ENCODE measurements at regions of chr9 and their contacts with region 1.

Region 1: GRCh38 chr9:83538172-83538889 is at the start of gene FRMD3:
- DNase-seq: peak; percentile 91
- H3K4me3 ChIP-seq: peak within 1 kb of the TSS; percentile 74 to 79
- H3K27ac ChIP-seq: peak within 1 kb of the TSS; percentile 40 to 80; a peak in 3 of 4 replicates
- H3K4me1 ChIP-seq: peaks cover 0 to 23% of the 10 kb centered on the region in 2 experiments; a peak in 1 of 4 replicates
- H3K27me3 ChIP-seq: no peaks in the 10 kb centered on the region
- CTCF ChIP-seq: peak; percentile 70
- EP300 ChIP-seq: no peak
- RAD21 ChIP-seq: peak; percentile 68
- polyA plus RNA-seq, gene FRMD3: 0.89 and 1.3 TPM in 2 replicates

Region 2: GRCh38 chr9:83199243-83199642 is 339.1 kb before region 1 on chr9:
- CTCF ChIA-PET with region 1: interaction called, 12 read pairs
- POLR2A ChIA-PET with region 1: no interaction called
- DNase-seq: peak; percentile 63
- H3K4me3 ChIP-seq: no peak overlapping the region; a peak in 1 of 4 replicates
- H3K27ac ChIP-seq: no peak overlapping the region
- H3K4me1 ChIP-seq: peaks cover 0 to 8% of the 10 kb centered on the region in 2 experiments; a peak in 1 of 4 replicates
- H3K27me3 ChIP-seq: peaks cover 4% of the 10 kb centered on the region; the same call in 1 of the 2 replicates
- CTCF ChIP-seq: peak; percentile 69
- EP300 ChIP-seq: no peak
- RAD21 ChIP-seq: peak; percentile 97

Region 3: DNA sequence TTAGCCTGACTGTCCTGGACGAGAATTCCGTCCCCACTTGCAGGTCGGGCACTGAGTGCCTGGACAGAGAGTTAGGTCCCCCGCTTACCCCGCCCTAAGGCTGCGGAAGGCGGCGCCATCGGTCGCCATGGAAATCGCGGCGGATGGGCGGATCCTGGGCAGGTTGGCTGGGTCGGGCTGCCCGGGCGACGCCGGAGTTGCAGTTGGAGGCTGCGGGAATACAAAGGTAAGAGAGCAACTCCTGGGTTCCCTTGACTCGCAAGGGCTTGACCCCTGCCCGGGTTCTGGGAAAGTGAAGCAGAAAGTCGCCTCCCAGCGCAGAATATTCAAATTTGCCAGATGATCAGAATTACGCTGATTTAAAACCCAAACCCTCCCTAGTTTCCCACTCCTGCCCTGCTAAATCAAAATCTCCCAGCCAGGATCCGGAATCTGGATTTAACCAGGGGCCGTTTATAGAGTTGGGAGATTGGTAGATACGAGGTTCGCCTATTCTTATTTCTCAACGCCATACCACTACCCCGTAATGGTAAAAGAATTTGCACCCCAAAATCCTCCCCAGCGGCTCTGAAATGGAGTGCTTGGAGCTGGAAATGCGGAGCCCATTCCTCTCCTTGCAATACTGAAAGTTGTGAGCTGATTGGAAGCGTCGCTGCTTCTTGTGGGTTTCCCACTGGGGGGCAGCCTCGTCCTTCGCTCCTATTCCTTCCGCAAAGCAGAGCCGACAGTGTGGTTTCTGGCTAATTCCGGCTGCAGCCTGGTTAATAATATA is 319.0 kb before region 1 on chr9:
- CTCF ChIA-PET with region 1: interaction called, 17 read pairs
- POLR2A ChIA-PET with region 1: interaction called, 3 read pairs
- DNase-seq: peak; percentile 84
- H3K4me3 ChIP-seq: peak overlapping the region; percentile 80 to 83
- H3K27ac ChIP-seq: peak overlapping the region; percentile 57 to 93; a peak in 3 of 4 replicates
- H3K4me1 ChIP-seq: peaks cover 0 to 17% of the 10 kb centered on the region in 2 experiments; a peak in 3 of 4 replicates
- H3K27me3 ChIP-seq: no peaks in the 10 kb centered on the region
- CTCF ChIP-seq: peak; percentile 45
- EP300 ChIP-seq: no peak
- RAD21 ChIP-seq: peak; percentile 82

Region 4: DNA sequence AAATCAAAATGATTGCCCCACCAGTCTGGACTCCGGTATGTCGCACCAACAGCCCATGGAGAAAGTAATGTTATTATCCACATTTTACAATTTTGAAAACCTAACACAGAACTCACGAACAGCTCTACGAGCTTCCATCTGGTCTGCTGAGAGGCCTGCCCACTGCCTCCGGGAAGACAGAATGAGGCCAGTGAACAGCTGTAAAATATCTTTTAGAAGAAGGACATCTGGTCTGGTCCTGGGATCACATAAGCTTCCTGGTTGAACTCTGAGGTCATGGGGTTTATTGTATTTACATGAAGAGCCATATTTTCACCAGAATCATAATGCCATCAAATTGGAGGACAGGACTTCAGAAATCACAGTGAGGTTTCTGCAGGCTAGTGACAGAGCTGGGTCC is 89.2 kb before region 1 on chr9:
- CTCF ChIA-PET with region 1: interaction called, 16 read pairs
- POLR2A ChIA-PET with region 1: interaction called, 5 read pairs
- DNase-seq: peak; percentile 80
- H3K4me3 ChIP-seq: no peak overlapping the region
- H3K27ac ChIP-seq: peak overlapping the region; percentile 26 to 97; a peak in 2 of 4 replicates
- H3K4me1 ChIP-seq: peaks cover 0 to 39% of the 10 kb centered on the region in 2 experiments; a peak in 2 of 4 replicates
- H3K27me3 ChIP-seq: no peaks in the 10 kb centered on the region
- CTCF ChIP-seq: no peak
- EP300 ChIP-seq: peak in 1 of 2 experiments; percentile 88; a peak in 2 of 4 replicates
- RAD21 ChIP-seq: no peak

Region 5: GRCh38 chr9:83526901-83527300 is 11.4 kb before region 1 on chr9:
- CTCF ChIA-PET with region 1: interaction called, 11 read pairs
- POLR2A ChIA-PET with region 1: interaction called, 3 read pairs
- DNase-seq: no peak
- H3K4me3 ChIP-seq: no peak overlapping the region
- H3K27ac ChIP-seq: peak overlapping the region in 1 of 2 experiments; percentile 28; a peak in 1 of 4 replicates
- H3K4me1 ChIP-seq: peaks cover 4 to 10% of the 10 kb centered on the region in 2 experiments; a peak in 2 of 4 replicates
- H3K27me3 ChIP-seq: no peaks in the 10 kb centered on the region
- CTCF ChIP-seq: no peak
- EP300 ChIP-seq: no peak
- RAD21 ChIP-seq: no peak

Region 6: DNA sequence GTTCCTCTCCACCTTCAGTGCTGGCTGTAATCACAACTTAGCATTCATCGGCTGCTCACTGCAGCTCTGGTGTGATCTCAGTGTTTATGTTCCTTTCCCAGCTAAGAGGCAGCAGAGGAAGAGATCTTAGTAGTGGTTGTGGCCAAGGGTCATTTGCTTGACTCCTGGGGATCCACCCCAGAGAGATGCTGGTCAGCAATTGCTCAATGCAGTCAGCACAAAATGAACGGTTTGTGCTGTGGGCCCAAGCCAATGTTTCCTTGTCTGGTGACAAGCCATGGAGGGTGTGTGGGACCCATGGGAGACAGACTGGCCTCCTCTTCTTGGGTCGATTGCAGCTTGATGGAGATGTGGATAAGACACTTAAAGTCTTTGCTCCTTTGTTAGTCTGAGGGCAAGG is 15.9 kb after region 1 on chr9:
- CTCF ChIA-PET with region 1: interaction called, 28 read pairs
- POLR2A ChIA-PET with region 1: no interaction called
- DNase-seq: no peak
- H3K4me3 ChIP-seq: no peak overlapping the region
- H3K27ac ChIP-seq: no peak overlapping the region
- H3K4me1 ChIP-seq: peaks cover 0 to 2% of the 10 kb centered on the region in 2 experiments; a peak in 1 of 4 replicates
- H3K27me3 ChIP-seq: no peaks in the 10 kb centered on the region
- CTCF ChIP-seq: no peak
- EP300 ChIP-seq: no peak
- RAD21 ChIP-seq: no peak

Region 7: GRCh38 chr9:83633255-83633654 is 94.9 kb after region 1 on chr9:
- CTCF ChIA-PET with region 1: no interaction called
- POLR2A ChIA-PET with region 1: no interaction called
- DNase-seq: no peak
- H3K4me3 ChIP-seq: no peak overlapping the region
- H3K27ac ChIP-seq: no peak overlapping the region
- H3K4me1 ChIP-seq: peaks cover 0 to 5% of the 10 kb centered on the region in 2 experiments; a peak in 2 of 4 replicates
- H3K27me3 ChIP-seq: no peaks in the 10 kb centered on the region
- CTCF ChIP-seq: no peak
- EP300 ChIP-seq: no peak
- RAD21 ChIP-seq: no peak

Region 8: DNA sequence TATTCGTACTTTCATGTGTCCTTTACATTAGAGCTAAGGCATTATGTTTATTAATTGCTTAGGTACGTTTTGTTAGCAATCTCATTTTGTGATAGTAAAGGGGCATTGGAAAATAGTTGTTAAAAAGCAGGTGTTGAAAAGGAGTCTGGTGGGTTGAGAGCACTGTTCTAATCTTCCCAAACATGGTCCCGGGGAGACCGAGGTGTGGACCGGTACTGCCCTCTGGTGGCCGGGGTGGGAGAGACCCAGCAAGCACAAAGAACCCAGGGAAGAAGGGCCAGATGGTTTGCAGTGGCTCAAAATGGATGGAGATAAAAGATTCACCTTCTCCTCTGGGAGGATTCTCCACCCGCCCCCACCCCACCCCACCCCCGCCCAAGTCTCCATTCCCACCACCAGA is 110.7 kb after region 1 on chr9:
- CTCF ChIA-PET with region 1: interaction called, 12 read pairs
- POLR2A ChIA-PET with region 1: no interaction called
- DNase-seq: peak; percentile 77
- H3K4me3 ChIP-seq: no peak overlapping the region; a peak in 1 of 4 replicates
- H3K27ac ChIP-seq: peak overlapping the region in 1 of 2 experiments; percentile 85; a peak in 2 of 4 replicates
- H3K4me1 ChIP-seq: peaks cover 0 to 13% of the 10 kb centered on the region in 2 experiments; a peak in 3 of 4 replicates
- H3K27me3 ChIP-seq: no peaks in the 10 kb centered on the region
- CTCF ChIP-seq: peak; percentile 73
- EP300 ChIP-seq: no peak
- RAD21 ChIP-seq: peak; percentile 80

Region 9: DNA sequence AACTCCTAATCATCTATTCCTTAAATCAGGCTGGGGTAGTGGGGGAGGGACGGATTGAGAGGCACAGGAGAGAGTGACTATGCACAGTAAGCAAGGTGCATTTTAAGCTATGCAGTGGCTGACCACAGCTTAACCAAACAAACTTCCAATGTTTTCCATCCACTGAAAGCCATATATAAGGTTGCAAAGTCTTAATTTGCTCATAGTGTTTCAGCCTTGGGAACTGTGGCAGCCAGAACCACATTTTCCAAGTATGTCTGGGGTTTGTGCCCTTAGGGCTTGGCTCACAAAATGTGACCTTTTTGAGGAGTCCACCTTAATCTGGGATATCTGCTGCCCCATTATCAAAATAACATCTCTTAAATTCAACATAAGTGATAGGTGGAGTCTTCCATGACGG is 184.4 kb after region 1 on chr9:
- CTCF ChIA-PET with region 1: no interaction called
- POLR2A ChIA-PET with region 1: no interaction called
- DNase-seq: no peak
- H3K4me3 ChIP-seq: no peak overlapping the region
- H3K27ac ChIP-seq: no peak overlapping the region
- H3K4me1 ChIP-seq: no peaks in the 10 kb centered on the region
- H3K27me3 ChIP-seq: no peaks in the 10 kb centered on the region
- CTCF ChIP-seq: no peak
- EP300 ChIP-seq: no peak
- RAD21 ChIP-seq: no peak

Measured in SK-N-SH (cell line).